ENCODE measurements at regions of chr14 and their contacts with region 1.

Region 1: GRCh38 chr14:33219957-33220356 is 281.3 kb downstream of the NPAS3 start:
- DNase-seq: no peak
- ATAC-seq: no peak
- H3K4me3 ChIP-seq: no peak overlapping the region
- H3K27ac ChIP-seq: no peak overlapping the region
- H3K4me1 ChIP-seq: no peaks in the 10 kb centered on the region
- H3K27me3 ChIP-seq: no peaks in the 10 kb centered on the region
- CTCF ChIP-seq: no peak

Region 2: GRCh38 chr14:33098016-33098415 is 121.9 kb before region 1 on chr14:
- CTCF ChIA-PET with region 1: no interaction called
- POLR2A ChIA-PET with region 1: interaction called, 19 read pairs
- intact Hi-C with region 1: no loop called
- DNase-seq: no peak
- ATAC-seq: no peak
- H3K4me3 ChIP-seq: no peak overlapping the region
- H3K27ac ChIP-seq: no peak overlapping the region
- H3K4me1 ChIP-seq: no peaks in the 10 kb centered on the region
- H3K27me3 ChIP-seq: no peaks in the 10 kb centered on the region
- CTCF ChIP-seq: no peak

Region 3: GRCh38 chr14:33198684-33199083 is 21.3 kb before region 1 on chr14:
- CTCF ChIA-PET with region 1: no interaction called
- POLR2A ChIA-PET with region 1: no interaction called
- intact Hi-C with region 1: no loop called
- DNase-seq: no peak
- ATAC-seq: no peak
- H3K4me3 ChIP-seq: no peak overlapping the region
- H3K27ac ChIP-seq: no peak overlapping the region
- H3K4me1 ChIP-seq: peaks cover 26% of the 10 kb centered on the region
- H3K27me3 ChIP-seq: no peaks in the 10 kb centered on the region
- CTCF ChIP-seq: no peak

Region 4: GRCh38 chr14:33534632-33535031 is 314.7 kb after region 1 on chr14:
- CTCF ChIA-PET with region 1: no interaction called
- POLR2A ChIA-PET with region 1: no interaction called
- intact Hi-C with region 1: no loop called
- DNase-seq: no peak
- ATAC-seq: no peak
- H3K4me3 ChIP-seq: no peak overlapping the region
- H3K27ac ChIP-seq: no peak overlapping the region
- H3K4me1 ChIP-seq: no peaks in the 10 kb centered on the region
- H3K27me3 ChIP-seq: no peaks in the 10 kb centered on the region
- CTCF ChIP-seq: no peak